Activated CD8-positive, alpha-beta T cell treated with anti-CD3 and anti-CD28 coated beads, Interleukin-2, amount 10 ng/mL, durations not matched to agents 7 days and 5 days (primary cell): ENCODE measurements at regions of chr19 and their contacts with region 1.

Region 1: DNA sequence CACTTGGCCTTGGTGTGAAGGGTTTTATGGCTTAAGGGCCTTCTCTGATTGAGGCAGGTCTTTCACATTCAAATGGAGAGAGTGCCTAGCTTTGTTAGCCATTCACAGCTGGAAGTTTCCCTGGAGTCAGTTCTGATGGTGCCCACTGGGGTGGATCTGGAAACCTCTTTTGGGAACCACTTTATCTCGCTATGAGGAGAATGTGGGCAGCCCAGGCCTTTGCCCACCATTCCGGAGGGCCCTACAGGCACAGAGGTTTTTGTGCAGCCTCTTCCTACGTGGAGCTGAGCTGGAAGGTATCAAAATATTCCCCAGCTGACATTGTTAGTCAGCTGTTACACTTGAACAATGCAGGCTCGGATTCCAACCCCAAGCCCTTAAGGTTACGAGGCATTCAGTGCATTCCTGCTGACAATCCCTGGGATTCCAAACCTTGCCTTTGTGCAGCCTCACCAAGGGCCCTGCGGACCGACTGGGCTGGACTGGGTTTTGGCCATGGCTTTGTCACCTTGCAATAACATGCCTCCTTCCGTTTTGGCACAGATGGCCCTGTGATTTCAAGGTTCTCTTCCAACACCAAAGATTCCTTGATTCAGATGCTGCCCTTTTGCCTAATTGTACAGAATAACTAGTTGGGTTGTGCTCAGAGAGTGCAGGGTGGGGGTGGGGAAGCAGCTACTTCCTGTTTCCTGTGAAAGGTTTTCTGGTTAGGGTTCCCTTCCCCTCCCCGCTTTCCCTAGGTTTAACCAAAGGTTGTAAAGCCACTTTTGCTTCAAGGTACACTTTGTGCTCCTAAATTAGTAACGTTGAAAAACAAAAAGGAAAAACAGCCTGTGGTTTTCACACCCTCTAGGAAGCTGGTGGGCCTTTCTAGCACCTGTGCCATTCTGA is 27.0 kb downstream of the SAE1 start:
- DNase-seq: peak; percentile 61
- ATAC-seq: peak; percentile 12
- H3K4me3 Mint-ChIP-seq: peak overlapping the region; percentile 63
- H3K27ac Mint-ChIP-seq: peak overlapping the region; percentile 85
- H3K4me1 Mint-ChIP-seq: peaks cover 60% of the 10 kb centered on the region
- H3K27me3 Mint-ChIP-seq: no peaks in the 10 kb centered on the region

Region 2: DNA sequence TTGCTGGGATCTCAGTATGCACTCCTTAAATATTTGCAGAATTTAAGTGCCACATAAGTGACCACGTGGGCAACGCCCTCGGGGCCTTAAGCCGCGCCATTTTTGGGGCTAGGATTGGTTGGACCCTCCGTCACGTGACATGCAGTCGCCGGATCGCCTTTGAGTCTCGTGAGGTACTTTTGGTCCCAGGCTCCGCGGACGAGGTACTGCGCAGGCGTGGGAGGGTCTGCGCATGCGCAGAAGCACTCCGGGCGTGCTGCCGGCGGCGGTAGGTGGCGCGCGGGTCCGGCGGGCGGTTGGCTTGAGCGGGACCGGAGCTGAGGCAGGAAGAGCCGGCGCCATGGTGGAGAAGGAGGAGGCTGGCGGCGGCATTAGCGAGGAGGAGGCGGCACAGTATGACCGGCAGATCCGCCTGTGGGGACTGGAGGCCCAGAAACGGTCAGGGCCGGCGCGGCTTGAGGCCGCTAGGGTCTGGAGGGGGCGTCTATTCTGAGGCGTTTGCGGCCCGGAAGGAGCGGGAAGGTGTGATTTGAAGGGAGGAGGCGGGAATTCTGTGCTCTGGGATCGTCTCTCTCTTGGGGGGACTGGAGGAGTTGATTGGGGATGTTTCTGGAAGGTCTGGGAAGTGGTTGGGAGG is 27.0 kb before region 1 on chr19 and contains the start of gene SAE1:
- CTCF ChIA-PET with region 1: interaction called, 13 read pairs
- POLR2A ChIA-PET with region 1: interaction called, 6 read pairs
- DNase-seq: peak; percentile 94
- ATAC-seq: peak; percentile 91
- H3K4me3 Mint-ChIP-seq: peak within 1 kb of the TSS; percentile 99
- H3K27ac Mint-ChIP-seq: peak within 1 kb of the TSS; percentile 98
- H3K4me1 Mint-ChIP-seq: peaks cover 51% of the 10 kb centered on the region
- H3K27me3 Mint-ChIP-seq: no peaks in the 10 kb centered on the region
- total RNA-seq, gene SAE1: 165 to 175 TPM

Region 3: GRCh38 chr19:47143322-47144073 is 14.2 kb before region 1 on chr19:
- CTCF ChIA-PET with region 1: interaction called, 28 read pairs
- POLR2A ChIA-PET with region 1: no interaction called
- DNase-seq: no peak
- ATAC-seq: no peak
- H3K4me3 Mint-ChIP-seq: no peak overlapping the region
- H3K27ac Mint-ChIP-seq: peak overlapping the region; percentile 26
- H3K4me1 Mint-ChIP-seq: peaks cover 56% of the 10 kb centered on the region
- H3K27me3 Mint-ChIP-seq: no peaks in the 10 kb centered on the region

Region 4: DNA sequence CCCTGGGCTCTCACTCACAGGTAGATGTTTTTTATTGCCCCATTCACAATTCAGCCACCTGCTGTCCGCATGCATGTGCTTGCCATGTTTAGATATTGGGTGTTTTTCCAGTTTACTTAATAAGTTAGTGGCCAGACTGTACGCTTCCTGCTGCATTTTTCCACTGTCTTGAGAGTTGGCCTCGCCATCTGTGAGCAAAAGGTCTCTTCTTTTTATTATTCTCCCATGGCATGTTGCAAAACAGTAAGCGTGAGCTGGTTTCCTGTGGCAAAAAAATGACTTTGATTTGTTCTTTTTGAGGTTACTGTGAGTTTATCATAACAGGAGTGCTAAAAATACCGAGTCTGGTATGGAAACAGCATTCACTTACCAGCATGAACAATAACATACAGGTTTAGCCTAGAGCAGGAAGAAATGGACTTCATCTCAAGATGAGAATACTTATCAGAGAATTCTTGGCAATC is 19.0 kb after region 1 on chr19:
- CTCF ChIA-PET with region 1: interaction called, 11 read pairs
- POLR2A ChIA-PET with region 1: interaction called, 12 read pairs
- DNase-seq: peak; percentile 41
- ATAC-seq: peak; percentile 73
- H3K4me3 Mint-ChIP-seq: peak overlapping the region; percentile 17
- H3K27ac Mint-ChIP-seq: peak overlapping the region; percentile 74
- H3K4me1 Mint-ChIP-seq: peaks cover 54% of the 10 kb centered on the region
- H3K27me3 Mint-ChIP-seq: no peaks in the 10 kb centered on the region

Region 5: DNA sequence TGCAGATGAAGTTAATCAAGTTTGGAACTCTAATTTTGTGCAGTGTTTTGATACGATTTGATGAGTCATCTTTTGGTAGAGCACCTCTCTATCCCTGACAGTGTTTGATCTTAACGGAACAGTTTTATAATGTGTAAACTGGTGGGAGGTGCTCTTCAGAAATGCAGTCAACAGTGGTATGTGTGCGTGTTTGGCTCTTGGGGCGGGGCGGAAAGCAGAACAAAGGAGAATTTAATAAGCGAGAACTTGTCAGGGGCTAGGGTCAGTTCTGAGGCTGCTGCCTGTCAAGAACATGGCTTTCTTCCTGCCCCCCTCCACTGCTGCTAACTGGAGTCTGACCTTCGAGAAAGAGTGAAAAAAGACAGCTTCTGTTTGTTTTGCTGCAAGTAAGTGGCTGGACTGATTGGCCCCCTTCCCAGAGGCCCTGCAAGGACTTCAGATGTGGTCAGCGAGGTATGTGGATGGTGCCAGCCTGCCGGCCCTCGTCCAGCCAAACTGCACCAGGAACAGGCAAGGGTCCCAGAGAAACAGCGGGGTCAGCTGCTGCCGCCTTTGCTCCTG is 32.6 kb after region 1 on chr19:
- CTCF ChIA-PET with region 1: interaction called, 55 read pairs
- POLR2A ChIA-PET with region 1: interaction called, 19 read pairs
- DNase-seq: peak; percentile 34
- ATAC-seq: no peak
- H3K4me3 Mint-ChIP-seq: no peak overlapping the region
- H3K27ac Mint-ChIP-seq: peak overlapping the region; percentile 27
- H3K4me1 Mint-ChIP-seq: peaks cover 61% of the 10 kb centered on the region
- H3K27me3 Mint-ChIP-seq: no peaks in the 10 kb centered on the region

Region 6: DNA sequence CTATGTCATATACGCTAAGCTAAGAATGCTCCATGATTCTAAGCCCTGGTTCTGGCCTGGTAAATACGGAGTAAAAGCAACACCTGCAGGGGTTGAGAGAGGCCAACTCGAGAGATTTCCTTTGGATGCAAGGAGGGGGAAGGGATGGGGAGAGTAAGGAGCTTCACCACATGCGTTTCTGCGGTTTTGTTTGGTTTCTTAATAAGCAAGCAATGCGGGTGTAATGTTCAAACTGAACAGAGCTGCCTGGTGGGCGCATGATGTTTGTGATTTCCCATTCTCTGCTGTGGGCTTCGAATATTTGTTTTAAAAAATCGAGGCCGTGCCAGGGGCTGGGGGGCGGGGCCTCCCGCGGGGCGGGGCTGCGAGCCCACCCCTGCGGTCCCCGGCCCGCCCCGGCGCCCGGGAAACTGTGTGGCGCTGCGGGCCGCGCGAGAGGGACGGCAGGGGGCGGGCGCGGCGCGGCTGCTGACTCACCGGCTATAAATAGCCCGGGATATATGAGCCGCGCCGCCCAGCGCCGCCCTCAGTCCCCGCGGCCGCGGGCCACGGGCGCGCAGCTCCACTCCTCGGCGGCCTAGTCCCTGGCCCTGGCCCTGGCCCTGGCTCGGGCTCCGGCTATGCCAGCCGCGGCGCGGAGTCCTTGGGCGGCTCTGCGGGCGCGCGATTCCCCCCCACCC is 68.2 kb after region 1 on chr19:
- CTCF ChIA-PET with region 1: interaction called, 7 read pairs
- POLR2A ChIA-PET with region 1: interaction called, 15 read pairs
- DNase-seq: peak; percentile 88
- ATAC-seq: peak; percentile 63
- H3K4me3 Mint-ChIP-seq: peak overlapping the region; percentile 37
- H3K27ac Mint-ChIP-seq: peak overlapping the region; percentile 90
- H3K4me1 Mint-ChIP-seq: peaks cover 20% of the 10 kb centered on the region
- H3K27me3 Mint-ChIP-seq: no peaks in the 10 kb centered on the region